ENCODE measurements at regions of chr11 and their contacts with region 1.

Region 1: GRCh38 chr11:20022363-20023081 is 137.8 kb downstream of the DBX1 start:
- DNase-seq: no peak
- H3K4me3 ChIP-seq: peak overlapping the region; percentile 48
- CTCF ChIP-seq: no peak

Region 2: DNA sequence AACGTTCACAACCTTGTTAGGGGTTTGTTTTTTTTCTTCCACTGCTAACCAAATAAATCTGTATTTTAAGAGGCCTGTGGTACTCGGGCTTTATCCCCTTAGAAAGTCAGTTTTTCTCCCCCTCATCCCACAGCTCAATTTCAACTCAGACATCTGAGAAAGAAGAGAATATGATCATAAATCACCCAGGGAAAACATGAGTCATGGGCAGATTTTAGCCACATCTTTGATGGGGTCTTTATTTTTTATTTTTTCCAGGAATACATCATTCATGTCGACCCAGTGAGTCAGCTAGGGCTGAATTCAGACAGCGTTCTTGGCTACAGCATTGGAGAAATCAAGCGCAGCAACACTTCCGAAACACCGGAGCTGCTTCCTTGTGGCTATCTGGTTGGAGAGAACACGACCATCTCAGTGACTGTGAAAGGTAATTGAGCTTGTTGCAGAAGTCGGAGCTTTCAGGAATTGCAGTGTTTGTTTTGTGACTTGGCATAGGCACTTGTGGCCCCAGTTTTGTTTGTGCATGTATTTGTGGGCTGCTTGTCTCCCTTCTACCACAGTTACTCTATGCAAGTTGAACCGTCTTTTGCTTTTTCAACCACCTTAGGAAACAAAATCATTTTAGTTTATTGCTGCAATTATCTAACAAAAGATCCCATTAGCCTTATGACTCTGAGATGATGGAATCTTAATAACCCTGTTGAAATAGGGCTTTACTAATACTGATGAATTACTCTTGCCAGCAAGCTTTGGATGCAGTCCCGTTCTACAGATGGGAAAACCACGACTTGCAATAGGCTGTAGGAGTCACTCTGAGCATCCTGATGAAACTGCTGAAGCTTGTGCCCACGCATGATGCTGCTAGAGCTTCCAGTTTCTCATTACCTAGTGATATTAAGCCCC is 75.0 kb after region 1 on chr11:
- in situ Hi-C with region 1: loop called (anchors 5 kb)
- DNase-seq: peak; percentile 88
- H3K4me3 ChIP-seq: no peak overlapping the region
- CTCF ChIP-seq: no peak

Measured in astrocyte of the cerebellum (primary cell).